ENCODE measurements at regions of chr5 and their contacts with region 1.

Region 1: GRCh38 chr5:59188419-59189225 is 605.7 kb downstream of the RAB3C start:
- DNase-seq: peak; percentile 90

Region 2: GRCh38 chr5:59380350-59380951 is 191.8 kb after region 1 on chr5:
- intact Hi-C with region 1: loop called in 1 of 2 experiments (anchors 5 kb)
- DNase-seq: no peak

Region 3: GRCh38 chr5:59666440-59667068 is 477.9 kb after region 1 on chr5:
- intact Hi-C with region 1: no loop called
- DNase-seq: no peak